ENCODE measurements at regions of chr7 and their contacts with region 1.

Region 1: GRCh38 chr7:34327681-34328080 is 330.3 kb upstream of the NPSR1 start:
- DNase-seq: no peak
- H3K4me3 ChIP-seq: no peak overlapping the region
- H3K27ac ChIP-seq: no peak overlapping the region
- H3K4me1 ChIP-seq: peaks cover 5% of the 10 kb centered on the region
- H3K27me3 ChIP-seq: no peaks in the 10 kb centered on the region
- CTCF ChIP-seq: no peak

Region 2: GRCh38 chr7:34385390-34385789 is 57.7 kb after region 1 on chr7:
- CTCF ChIA-PET with region 1: interaction called, 16 read pairs
- dilution Hi-C with region 1: no loop called
- in situ Hi-C with region 1: no loop called
- intact Hi-C with region 1: no loop called
- DNase-seq: no peak
- H3K4me3 ChIP-seq: no peak overlapping the region
- H3K27ac ChIP-seq: no peak overlapping the region
- H3K4me1 ChIP-seq: no peaks in the 10 kb centered on the region
- H3K27me3 ChIP-seq: no peaks in the 10 kb centered on the region
- CTCF ChIP-seq: no peak

Measured in mammary epithelial cell (primary cell).